H1 (cell line): ENCODE measurements at regions of chr18 and their contacts with region 1.

Region 1: DNA sequence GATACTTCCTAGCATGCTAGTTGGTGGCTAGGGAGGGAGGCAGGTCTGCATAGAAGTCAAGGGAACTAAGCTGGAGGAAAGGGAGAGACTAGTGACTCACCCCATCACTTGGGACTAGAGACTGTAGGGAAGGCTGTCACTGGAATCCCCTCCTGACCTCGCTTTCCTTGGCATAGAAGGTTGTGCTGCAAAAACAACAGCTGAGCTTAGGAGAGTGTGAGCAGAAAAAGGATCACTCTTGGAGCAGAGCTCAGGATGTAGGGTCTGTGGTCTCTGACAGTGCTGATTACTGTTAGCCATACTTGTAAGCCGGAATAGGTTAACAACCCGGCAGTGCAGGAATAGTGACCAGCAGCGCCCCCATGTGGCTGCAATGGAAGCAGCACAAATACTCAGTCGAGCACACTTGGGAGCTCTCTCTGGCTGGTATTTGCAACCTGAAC is 66.9 kb upstream of the SMAD2 start:
- DNase-seq: peak; percentile 70 to 96
- H3K4me3 ChIP-seq: no peak overlapping the region
- H3K27ac ChIP-seq: no peak overlapping the region
- H3K4me1 ChIP-seq: no peaks in the 10 kb centered on the region; a peak in 1 of 7 replicates
- H3K27me3 ChIP-seq: no peaks in the 10 kb centered on the region
- CTCF ChIP-seq: peak; percentile 84 to 96 (median 95)
- EP300 ChIP-seq: no peak
- POLR2A ChIP-seq: no peak
- RAD21 ChIP-seq: peak; percentile 91 to 97

Region 2: DNA sequence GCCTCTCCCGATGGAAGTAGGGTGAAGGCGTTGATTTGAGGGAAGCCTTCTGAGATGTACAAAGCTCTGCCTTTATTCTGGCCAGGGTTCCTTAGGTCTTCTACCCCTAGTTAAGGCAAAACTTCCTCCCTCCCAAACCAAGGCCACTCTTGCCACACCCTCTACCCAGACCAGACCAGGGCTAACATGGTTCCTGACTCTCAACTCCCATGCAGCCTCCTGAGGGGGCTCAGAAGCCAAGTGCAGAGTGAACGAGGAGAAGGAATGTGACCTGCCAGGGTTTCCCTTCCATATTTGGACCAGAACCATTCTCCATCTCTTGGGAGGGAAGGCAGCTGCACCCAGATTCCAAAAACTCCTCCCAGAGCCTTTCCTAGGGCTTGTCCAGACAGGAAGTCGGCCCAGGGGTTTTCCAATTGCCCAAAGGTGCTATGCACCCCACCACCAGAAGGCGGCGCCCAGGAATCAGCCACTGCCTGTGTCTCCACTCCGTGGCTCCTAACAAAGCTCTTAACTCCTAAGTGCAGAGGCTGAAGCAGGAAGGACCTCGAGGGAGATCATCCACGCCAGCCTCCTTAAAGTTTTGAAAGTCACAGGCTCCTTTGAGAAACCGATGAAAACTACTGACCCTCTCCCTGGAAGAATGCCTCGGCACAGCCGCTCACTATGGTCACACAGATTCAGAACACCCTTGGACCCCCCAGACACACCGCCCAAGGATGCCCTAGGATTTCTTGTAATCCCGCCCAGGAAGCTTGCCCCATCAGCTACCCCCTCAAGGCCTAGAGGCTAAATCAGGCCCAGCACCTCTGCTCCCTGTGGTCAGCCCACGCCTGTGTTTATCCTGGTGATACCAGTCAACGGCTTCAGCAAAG is 224.7 kb before region 1 on chr18:
- CTCF ChIA-PET with region 1: interaction called, 30 read pairs
- POLR2A ChIA-PET with region 1: no interaction called
- DNase-seq: peak; percentile 78 to 99
- H3K4me3 ChIP-seq: no peak overlapping the region
- H3K27ac ChIP-seq: no peak overlapping the region
- H3K4me1 ChIP-seq: no peaks in the 10 kb centered on the region
- H3K27me3 ChIP-seq: no peaks in the 10 kb centered on the region; a peak in 1 of 7 replicates
- CTCF ChIP-seq: peak; percentile 93 to 95 (median 94)
- EP300 ChIP-seq: no peak
- POLR2A ChIP-seq: no peak
- RAD21 ChIP-seq: peak; percentile 91 to 94

Region 3: GRCh38 chr18:47893939-47894699 is 103.2 kb before region 1 on chr18:
- CTCF ChIA-PET with region 1: interaction called, 35 read pairs
- POLR2A ChIA-PET with region 1: no interaction called
- DNase-seq: no peak
- H3K4me3 ChIP-seq: no peak overlapping the region
- H3K27ac ChIP-seq: no peak overlapping the region
- H3K4me1 ChIP-seq: peaks cover 0 to 7% (median 1%) of the 10 kb centered on the region in 4 experiments; a peak in 3 of 7 replicates
- H3K27me3 ChIP-seq: no peaks in the 10 kb centered on the region
- CTCF ChIP-seq: no peak
- EP300 ChIP-seq: no peak
- POLR2A ChIP-seq: no peak
- RAD21 ChIP-seq: no peak

Region 4: GRCh38 chr18:47930931-47931717 is 66.2 kb before region 1 on chr18:
- CTCF ChIA-PET with region 1: interaction called, 117 read pairs
- POLR2A ChIA-PET with region 1: interaction called, 9 read pairs
- DNase-seq: peak; percentile 86 to 92
- H3K4me3 ChIP-seq: peak overlapping the region; percentile 61 to 96 (median 72)
- H3K27ac ChIP-seq: peak overlapping the region; percentile 96
- H3K4me1 ChIP-seq: peaks cover 4 to 17% (median 16%) of the 10 kb centered on the region in 4 experiments; a peak in 6 of 7 replicates
- H3K27me3 ChIP-seq: no peaks in the 10 kb centered on the region
- CTCF ChIP-seq: no peak
- EP300 ChIP-seq: no peak
- POLR2A ChIP-seq: peak; percentile 55 to 95
- RAD21 ChIP-seq: no peak; a peak in 1 of 4 replicates

Region 5: DNA sequence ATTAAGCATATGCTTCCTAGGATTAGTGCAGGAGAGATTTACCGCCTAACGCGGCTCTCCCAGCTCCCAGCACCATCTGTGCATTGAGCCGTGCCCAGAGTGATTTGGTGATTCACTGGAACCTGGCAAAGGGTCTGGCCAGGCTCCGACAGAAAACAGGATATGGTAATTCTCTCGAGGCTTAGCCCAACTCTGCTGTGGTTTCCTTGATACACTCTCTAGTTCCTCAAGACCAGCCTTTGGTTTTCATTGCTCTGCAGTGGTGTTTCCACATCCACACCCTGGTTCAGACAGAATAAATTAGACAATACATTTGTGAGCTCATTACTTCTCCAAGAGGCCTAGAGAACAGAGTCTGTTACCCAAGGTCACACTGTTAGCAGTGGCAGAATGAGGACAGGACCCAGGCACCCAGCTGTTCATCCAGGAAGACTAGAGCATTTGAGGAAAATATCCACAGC is 43.9 kb before region 1 on chr18:
- CTCF ChIA-PET with region 1: interaction called, 26 read pairs
- POLR2A ChIA-PET with region 1: no interaction called
- DNase-seq: no peak
- H3K4me3 ChIP-seq: no peak overlapping the region
- H3K27ac ChIP-seq: no peak overlapping the region
- H3K4me1 ChIP-seq: peaks cover 0 to 6% (median 0%) of the 10 kb centered on the region in 4 experiments; a peak in 1 of 7 replicates
- H3K27me3 ChIP-seq: no peaks in the 10 kb centered on the region
- CTCF ChIP-seq: no peak
- EP300 ChIP-seq: no peak
- POLR2A ChIP-seq: no peak
- RAD21 ChIP-seq: no peak

Region 6: DNA sequence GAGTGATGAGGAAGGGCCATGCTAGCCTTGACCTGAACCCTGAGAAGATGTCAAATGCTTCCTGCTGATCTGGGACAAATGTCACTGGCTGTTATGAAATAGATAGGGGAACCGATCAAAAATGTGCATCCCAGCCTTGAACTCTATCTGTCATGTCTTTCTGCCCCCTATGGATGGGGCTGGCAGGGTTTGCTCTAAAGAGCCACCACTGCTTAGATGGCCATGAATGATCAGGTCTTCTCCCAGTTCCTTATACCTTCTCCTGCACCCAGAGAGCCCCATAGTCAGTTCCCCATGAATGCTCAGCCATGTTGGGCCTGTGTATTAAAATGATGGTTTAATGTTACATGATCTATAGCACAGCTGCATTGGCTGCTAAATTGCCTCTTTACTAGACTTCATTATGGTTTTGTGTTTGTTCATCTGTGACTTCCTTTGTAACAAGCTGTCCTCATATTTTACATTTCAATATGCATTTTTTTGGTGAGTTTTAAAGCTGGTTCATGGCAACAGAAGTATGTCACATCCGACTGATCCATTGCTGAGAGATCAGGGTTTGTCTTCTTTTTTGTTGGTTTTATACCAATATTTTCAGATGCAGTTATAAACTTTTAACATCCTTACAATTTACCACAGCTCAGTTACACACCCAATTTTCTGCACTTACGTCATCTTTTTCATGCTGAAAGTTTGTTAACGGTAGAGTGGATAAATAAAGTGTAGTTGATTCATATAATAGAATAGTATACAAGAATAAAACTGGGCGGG is 10.6 kb before region 1 on chr18:
- CTCF ChIA-PET with region 1: interaction called, 59 read pairs
- POLR2A ChIA-PET with region 1: no interaction called
- DNase-seq: no peak
- H3K4me3 ChIP-seq: no peak overlapping the region
- H3K27ac ChIP-seq: no peak overlapping the region
- H3K4me1 ChIP-seq: peaks cover 0 to 5% (median under 1%) of the 10 kb centered on the region in 4 experiments; a peak in 4 of 7 replicates
- H3K27me3 ChIP-seq: no peaks in the 10 kb centered on the region
- CTCF ChIP-seq: no peak
- EP300 ChIP-seq: no peak
- POLR2A ChIP-seq: no peak
- RAD21 ChIP-seq: no peak

Region 7: GRCh38 chr18:48037481-48038271 is 40.3 kb after region 1 on chr18:
- CTCF ChIA-PET with region 1: no interaction called
- POLR2A ChIA-PET with region 1: no interaction called
- DNase-seq: peak in 1 of 2 experiments; percentile 69
- H3K4me3 ChIP-seq: no peak overlapping the region
- H3K27ac ChIP-seq: no peak overlapping the region
- H3K4me1 ChIP-seq: no peaks in the 10 kb centered on the region
- H3K27me3 ChIP-seq: no peaks in the 10 kb centered on the region; a peak in 1 of 7 replicates
- CTCF ChIP-seq: peak; percentile 78 to 88 (median 87)
- EP300 ChIP-seq: no peak
- POLR2A ChIP-seq: no peak
- RAD21 ChIP-seq: peak; percentile 83 to 86